ENCODE measurements at regions of chr17 and their contacts with region 1.

Region 1: GRCh38 chr17:60421273-60421934 is 885 bp upstream of the CHCT1 start:
- DNase-seq: peak; percentile 66
- H3K4me3 ChIP-seq: peak overlapping the region; percentile 58
- H3K27ac ChIP-seq: no peak overlapping the region
- H3K4me1 ChIP-seq: no peaks in the 10 kb centered on the region
- CTCF ChIP-seq: peak; percentile 99

Region 2: GRCh38 chr17:60231234-60231633 is 190.2 kb before region 1 on chr17:
- CTCF ChIA-PET with region 1: no interaction called
- POLR2A ChIA-PET with region 1: no interaction called
- intact Hi-C with region 1: loop called (anchors 5 kb)
- DNase-seq: peak; percentile 22
- H3K4me3 ChIP-seq: no peak overlapping the region
- H3K27ac ChIP-seq: no peak overlapping the region
- H3K4me1 ChIP-seq: no peaks in the 10 kb centered on the region
- CTCF ChIP-seq: peak; percentile 79

Region 3: GRCh38 chr17:60563746-60564145 is 142.3 kb after region 1 on chr17:
- CTCF ChIA-PET with region 1: no interaction called
- POLR2A ChIA-PET with region 1: no interaction called
- intact Hi-C with region 1: loop called (anchors 10 kb)
- DNase-seq: no peak
- H3K4me3 ChIP-seq: no peak overlapping the region
- H3K27ac ChIP-seq: no peak overlapping the region
- H3K4me1 ChIP-seq: no peaks in the 10 kb centered on the region
- CTCF ChIP-seq: no peak

Region 4: GRCh38 chr17:60639019-60639330 is 217.6 kb after region 1 on chr17:
- CTCF ChIA-PET with region 1: no interaction called
- POLR2A ChIA-PET with region 1: no interaction called
- intact Hi-C with region 1: loop called (anchors 5 kb)
- DNase-seq: no peak
- H3K4me3 ChIP-seq: no peak overlapping the region
- H3K27ac ChIP-seq: no peak overlapping the region
- H3K4me1 ChIP-seq: no peaks in the 10 kb centered on the region
- CTCF ChIP-seq: peak; percentile 12; the same call in 1 of the 2 replicates